GM23248 (cell line): ENCODE measurements at regions of chr5 and their contacts with region 1.

Region 1: GRCh38 chr5:90264689-90265544 is 144.6 kb downstream of the CETN3 start:
- DNase-seq: peak; percentile 77
- H3K4me3 ChIP-seq: no peak overlapping the region
- H3K27ac ChIP-seq: no peak overlapping the region
- H3K4me1 ChIP-seq: no peaks in the 10 kb centered on the region
- H3K27me3 ChIP-seq: no peaks in the 10 kb centered on the region

Region 2: GRCh38 chr5:88724201-88724600 is 1540.7 kb before region 1 on chr5:
- in situ Hi-C with region 1: loop called (anchors 25 kb)
- DNase-seq: peak; percentile 24
- H3K4me3 ChIP-seq: no peak overlapping the region
- H3K27ac ChIP-seq: no peak overlapping the region
- H3K4me1 ChIP-seq: no peaks in the 10 kb centered on the region
- H3K27me3 ChIP-seq: no peaks in the 10 kb centered on the region

Region 3: GRCh38 chr5:88748670-88749069 is 1516.2 kb before region 1 on chr5:
- in situ Hi-C with region 1: no loop called
- DNase-seq: no peak
- H3K4me3 ChIP-seq: no peak overlapping the region
- H3K27ac ChIP-seq: no peak overlapping the region
- H3K4me1 ChIP-seq: peaks cover 2% of the 10 kb centered on the region; the same call in 1 of the 2 replicates
- H3K27me3 ChIP-seq: no peaks in the 10 kb centered on the region

Region 4: GRCh38 chr5:88883059-88883835 is 1381.7 kb before region 1 on chr5 and contains the start of gene MEF2C:
- in situ Hi-C with region 1: loop called (anchors 25 kb)
- DNase-seq: peak; percentile 90
- H3K4me3 ChIP-seq: peak within 1 kb of the TSS; percentile 98
- H3K27ac ChIP-seq: peak within 1 kb of the TSS; percentile 74
- H3K4me1 ChIP-seq: peaks cover 31% of the 10 kb centered on the region
- H3K27me3 ChIP-seq: no peaks in the 10 kb centered on the region
- total RNA-seq, gene MEF2C: 3.4 TPM in 2 replicates